ENCODE measurements at regions of chr5 and their contacts with region 1.

Region 1: GRCh38 chr5:178221282-178221681 is 11.3 kb downstream of the PHYKPL start:
- DNase-seq: no peak
- H3K4me3 ChIP-seq: no peak overlapping the region
- H3K27ac ChIP-seq: no peak overlapping the region
- H3K27me3 ChIP-seq: no peaks in the 10 kb centered on the region
- CTCF ChIP-seq: no peak

Region 2: GRCh38 chr5:178232124-178232919 is 11.0 kb after region 1 on chr5 and contains the start of gene PHYKPL:
- CTCF ChIA-PET with region 1: interaction called, 10 read pairs
- POLR2A ChIA-PET with region 1: interaction called, 5 read pairs
- DNase-seq: no peak
- H3K4me3 ChIP-seq: peak within 1 kb of the TSS; percentile 86
- H3K27ac ChIP-seq: peak within 1 kb of the TSS; percentile 57
- H3K27me3 ChIP-seq: no peaks in the 10 kb centered on the region
- CTCF ChIP-seq: no peak
- polyA plus RNA-seq, gene PHYKPL: 33.4 and 36.0 TPM in 2 replicates

Region 3: DNA sequence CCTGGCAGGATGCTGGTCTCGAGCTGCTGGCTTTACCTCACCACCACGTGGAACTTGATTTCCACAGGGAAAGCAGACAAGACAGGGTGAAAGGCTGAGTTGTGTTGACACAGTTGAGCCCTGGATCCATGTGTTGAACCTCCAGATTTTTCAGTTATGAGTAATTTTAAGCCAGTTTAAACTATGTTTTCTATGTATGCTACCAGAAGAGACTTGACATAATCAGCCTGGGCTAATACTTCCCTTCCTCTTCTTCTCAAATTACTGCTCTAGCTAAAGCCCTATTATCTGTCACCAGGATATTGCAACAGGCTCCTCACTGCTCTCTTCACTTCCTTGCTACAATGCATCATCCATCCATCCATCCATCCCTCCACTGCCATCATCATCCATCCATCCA is 23.3 kb after region 1 on chr5:
- CTCF ChIA-PET with region 1: no interaction called
- POLR2A ChIA-PET with region 1: no interaction called
- DNase-seq: no peak
- H3K4me3 ChIP-seq: no peak overlapping the region
- H3K27ac ChIP-seq: peak overlapping the region; percentile 68
- H3K27me3 ChIP-seq: peaks cover 4% of the 10 kb centered on the region
- CTCF ChIP-seq: no peak

Region 4: GRCh38 chr5:178476972-178477754 is 255.9 kb after region 1 on chr5:
- CTCF ChIA-PET with region 1: no interaction called
- POLR2A ChIA-PET with region 1: no interaction called
- DNase-seq: no peak
- H3K4me3 ChIP-seq: no peak overlapping the region
- H3K27ac ChIP-seq: no peak overlapping the region
- H3K27me3 ChIP-seq: no peaks in the 10 kb centered on the region
- CTCF ChIP-seq: no peak